Ascending aorta (tissue), 2 donors: ENCODE measurements at regions of chr1 and their contacts with region 1.

Region 1: DNA sequence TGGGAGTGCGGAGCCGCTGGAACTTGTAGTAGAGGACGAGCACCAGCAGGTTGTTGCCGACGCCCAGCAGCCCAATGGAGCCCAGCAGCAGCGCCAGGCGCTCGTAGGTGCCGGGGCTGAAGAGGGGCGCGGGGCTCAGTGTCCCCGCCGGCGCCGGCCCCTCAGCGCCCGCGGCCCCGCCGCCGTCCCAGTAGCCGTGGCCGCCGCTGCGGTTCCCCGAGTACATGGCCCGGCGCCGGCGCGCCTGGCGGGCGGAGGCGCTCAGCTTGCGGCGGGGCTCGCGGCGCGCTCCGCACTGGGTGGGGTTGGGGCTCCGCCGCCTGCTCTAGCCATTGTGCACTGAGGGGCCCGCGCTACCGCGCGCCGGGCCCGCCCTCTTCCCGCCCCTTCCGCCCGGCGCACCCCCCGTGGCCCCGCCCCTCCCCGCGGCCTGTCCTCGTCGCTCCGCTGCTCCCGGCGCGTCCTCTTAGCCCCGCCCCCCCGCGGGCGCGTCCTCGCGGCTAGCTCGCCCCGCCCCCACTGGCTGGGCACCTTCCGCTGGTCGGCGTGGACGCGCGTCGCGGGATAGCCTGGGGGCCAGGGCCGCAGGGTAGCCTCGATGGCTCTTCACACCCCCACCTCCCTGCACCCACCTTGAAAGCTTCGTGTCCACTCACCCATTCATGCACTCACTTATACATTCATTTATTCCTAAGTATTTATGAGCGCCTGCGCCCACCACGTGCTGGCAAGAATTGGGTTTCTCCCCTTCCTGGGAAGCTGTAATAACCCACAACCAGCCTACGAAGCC is at the starts of genes CHML and OPN3:
- DNase-seq: peak; percentile 50 to 95
- H3K4me3 ChIP-seq: peak within 1 kb of the TSS; percentile 88 to 91
- H3K27ac ChIP-seq: peak within 1 kb of the TSS; percentile 77 to 80
- H3K4me1 ChIP-seq: peaks cover 0 to 9% of the 10 kb centered on the region in 2 donors
- H3K27me3 ChIP-seq: no peaks in the 10 kb centered on the region
- CTCF ChIP-seq: peak in 1 of 3 experiments; percentile 6
- total RNA-seq, gene CHML: 1.2 TPM
- total RNA-seq, gene OPN3: 9.0 TPM

Region 2: DNA sequence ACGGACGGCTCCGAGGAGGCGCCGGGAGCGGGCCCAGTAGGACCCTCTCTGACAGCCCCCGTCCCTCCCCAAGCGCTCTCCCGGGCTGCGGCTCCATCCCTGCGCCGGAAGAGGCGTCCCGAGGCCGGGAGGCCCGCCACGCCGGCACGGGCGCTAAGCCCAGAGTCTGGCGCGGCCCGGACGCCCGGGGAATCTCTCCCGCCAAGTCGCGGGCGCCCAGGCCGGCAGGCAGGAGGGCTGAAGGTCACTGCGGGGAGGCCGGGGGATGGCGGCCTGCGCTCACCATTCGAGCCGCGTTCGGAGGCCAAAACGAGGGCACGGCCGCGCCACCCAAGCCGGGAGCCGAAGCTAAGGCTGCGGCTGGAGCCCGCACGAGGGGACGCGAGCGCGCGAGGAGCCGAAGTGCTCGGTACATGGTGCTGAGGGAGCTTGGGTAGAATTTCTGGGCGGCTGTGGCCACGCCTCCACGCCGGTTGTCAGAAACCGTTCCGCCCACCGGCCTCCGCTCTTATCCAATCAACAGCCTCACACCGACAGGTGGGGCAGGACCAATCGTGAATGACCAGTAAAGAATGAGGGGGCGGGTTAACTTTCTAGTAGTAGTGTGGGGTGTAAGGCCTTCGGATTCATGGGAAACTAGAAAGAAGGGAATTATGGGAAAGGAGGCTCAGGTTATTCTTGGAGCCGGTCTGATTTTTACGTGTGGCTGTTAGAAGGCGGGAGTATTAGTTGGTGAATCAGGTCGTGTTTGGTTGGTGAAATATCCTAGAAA is 120.7 kb before region 1 on chr1 and contains the start of gene FH:
- intact Hi-C with region 1: loop called (anchors 1 kb)
- DNase-seq: peak; percentile 91 to 98
- H3K4me3 ChIP-seq: peak within 1 kb of the TSS; percentile 81 to 99
- H3K27ac ChIP-seq: peak within 1 kb of the TSS; percentile 92 to 95
- H3K4me1 ChIP-seq: peaks cover 0 to 3% of the 10 kb centered on the region in 2 donors
- H3K27me3 ChIP-seq: no peaks in the 10 kb centered on the region
- CTCF ChIP-seq: no peak
- total RNA-seq, gene FH: 29.9 TPM

Region 3: DNA sequence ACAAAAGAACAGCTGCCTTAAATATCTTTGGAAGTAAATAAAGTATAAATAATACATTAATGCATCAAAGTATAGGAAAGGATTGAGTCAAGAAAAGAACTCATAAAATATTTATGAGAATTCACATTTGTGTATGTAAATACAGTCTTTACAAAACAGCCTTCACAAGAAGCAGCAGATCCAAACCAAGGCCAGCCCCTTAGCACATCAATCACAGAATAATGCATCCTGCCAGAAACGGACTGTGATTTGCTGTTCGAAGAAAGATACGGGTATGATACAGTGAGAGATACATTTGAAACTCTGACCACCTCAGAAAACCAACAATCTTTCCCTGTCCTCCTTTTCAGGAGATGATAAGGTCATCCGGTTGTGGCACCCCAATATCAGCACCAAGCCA is 82.7 kb after region 1 on chr1:
- intact Hi-C with region 1: no loop called
- DNase-seq: no peak
- H3K4me3 ChIP-seq: no peak overlapping the region
- H3K27ac ChIP-seq: no peak overlapping the region
- H3K4me1 ChIP-seq: no peaks in the 10 kb centered on the region
- H3K27me3 ChIP-seq: no peaks in the 10 kb centered on the region
- CTCF ChIP-seq: no peak

Region 4: DNA sequence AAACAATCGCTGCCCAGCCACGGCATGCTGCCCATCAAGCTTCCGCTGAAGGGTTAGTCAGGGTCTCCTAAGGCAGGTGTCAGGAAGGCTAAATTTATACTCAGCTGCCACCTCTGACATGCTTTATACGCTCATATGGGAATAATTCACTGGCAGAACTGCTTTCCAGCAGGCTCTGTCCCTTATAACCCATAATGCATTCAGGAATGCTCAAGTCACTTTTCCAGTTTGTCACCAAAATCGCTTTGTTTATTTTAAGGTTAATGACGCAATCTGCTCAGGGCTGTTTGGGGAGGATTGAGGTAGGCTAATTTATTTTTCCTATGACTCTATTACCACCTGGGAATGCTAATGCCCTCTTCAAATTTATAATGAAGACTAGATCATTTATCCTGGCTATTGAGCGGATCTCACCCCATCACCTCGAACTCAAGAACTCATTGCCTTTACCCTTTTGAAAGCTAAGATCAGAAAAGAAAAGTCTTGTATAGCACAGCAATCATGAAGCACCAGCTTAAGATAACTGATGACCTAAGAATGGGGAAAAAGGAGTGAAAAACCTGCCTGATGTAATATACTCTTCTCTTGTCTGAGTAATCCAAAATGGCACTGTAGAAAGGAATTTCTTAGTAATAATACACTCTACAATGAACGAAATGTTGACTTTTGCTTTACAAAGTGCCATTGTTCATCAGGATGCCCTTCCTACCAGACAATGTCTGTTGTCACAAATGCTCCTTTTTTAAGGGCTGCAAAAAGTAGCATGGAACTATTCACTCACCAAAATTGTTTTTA is 109.9 kb after region 1 on chr1:
- intact Hi-C with region 1: loop called (anchors 5 kb)
- DNase-seq: no peak
- H3K4me3 ChIP-seq: peak overlapping the region in 1 of 2 donors; percentile 64
- H3K27ac ChIP-seq: peak overlapping the region in 1 of 2 donors; percentile 64
- H3K4me1 ChIP-seq: peaks cover 0 to 12% of the 10 kb centered on the region in 2 donors
- H3K27me3 ChIP-seq: no peaks in the 10 kb centered on the region
- CTCF ChIP-seq: no peak

Region 5: GRCh38 chr1:241847796-241848685 is 207.8 kb after region 1 on chr1 and contains the start of gene EXO1:
- intact Hi-C with region 1: loop called (anchors 5 kb)
- DNase-seq: peak; percentile 31 to 92
- H3K4me3 ChIP-seq: peak within 1 kb of the TSS; percentile 89 to 94
- H3K27ac ChIP-seq: peak within 1 kb of the TSS; percentile 97 to 99
- H3K4me1 ChIP-seq: peaks cover 0 to 8% of the 10 kb centered on the region in 2 donors
- H3K27me3 ChIP-seq: no peaks in the 10 kb centered on the region
- CTCF ChIP-seq: peak in 2 of 3 experiments; percentile 7 to 18
- total RNA-seq, gene EXO1: not detected